ENCODE measurements at regions of chr14 and their contacts with region 1.

Region 1: DNA sequence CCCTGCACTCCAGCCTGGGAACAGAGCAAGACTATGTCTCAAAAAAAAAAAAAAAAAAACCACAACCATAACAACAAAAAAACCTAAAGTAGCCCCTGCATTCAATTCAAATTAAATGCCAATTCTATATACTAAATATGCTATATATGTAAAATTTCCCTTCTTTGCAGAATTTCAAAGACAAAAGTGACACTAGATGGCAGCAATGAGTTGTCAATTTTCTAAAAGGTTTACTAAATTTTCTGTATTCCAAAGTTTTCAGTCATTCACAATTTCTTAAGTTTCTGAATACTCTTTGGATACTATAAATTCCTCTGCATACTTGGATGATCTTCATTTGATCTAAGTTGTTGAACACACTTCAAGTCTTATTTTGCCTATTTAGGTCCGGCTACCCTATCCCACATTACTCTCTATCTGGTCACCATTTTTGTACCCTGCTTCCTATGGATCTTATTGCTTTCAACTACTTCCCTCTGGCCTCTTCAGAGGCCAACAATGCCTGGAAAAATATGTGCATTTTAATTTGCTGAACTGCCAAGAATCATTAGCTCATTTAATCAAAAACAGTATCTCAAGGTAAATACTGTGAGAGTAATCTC is 27.9 kb downstream of the HNRNPC start:
- DNase-seq: no peak
- H3K4me3 Mint-ChIP-seq: no peak overlapping the region
- H3K27ac Mint-ChIP-seq: peak overlapping the region; percentile 29
- H3K4me1 Mint-ChIP-seq: peaks cover 42% of the 10 kb centered on the region
- H3K27me3 Mint-ChIP-seq: no peaks in the 10 kb centered on the region

Region 2: GRCh38 chr14:21258005-21258888 is 16.9 kb after region 1 on chr14:
- intact Hi-C with region 1: loop called (anchors 2 kb)
- DNase-seq: no peak
- H3K4me3 Mint-ChIP-seq: peak overlapping the region; percentile 73
- H3K27ac Mint-ChIP-seq: peak overlapping the region; percentile 79
- H3K4me1 Mint-ChIP-seq: peaks cover 52% of the 10 kb centered on the region
- H3K27me3 Mint-ChIP-seq: no peaks in the 10 kb centered on the region